ENCODE measurements at regions of chr5 and their contacts with region 1.

Region 1: GRCh38 chr5:115625579-115626444 is at the start of gene TMED7:
- DNase-seq: peak; percentile 100
- H3K4me3 Mint-ChIP-seq: no peak within 1 kb of the TSS
- H3K27ac Mint-ChIP-seq: peak within 1 kb of the TSS; percentile 92
- H3K4me1 Mint-ChIP-seq: peaks cover 23% of the 10 kb centered on the region
- H3K27me3 Mint-ChIP-seq: no peaks in the 10 kb centered on the region
- total RNA-seq, gene TMED7: 42.2 to 44.1 TPM

Region 2: GRCh38 chr5:115262321-115263077 is 363.3 kb before region 1 on chr5 and contains the start of gene PGGT1B:
- CTCF ChIA-PET with region 1: no interaction called
- POLR2A ChIA-PET with region 1: no interaction called
- intact Hi-C with region 1: loop called (anchors 1 kb)
- DNase-seq: peak; percentile 85
- H3K4me3 Mint-ChIP-seq: peak within 1 kb of the TSS; percentile 92
- H3K27ac Mint-ChIP-seq: peak within 1 kb of the TSS; percentile 80
- H3K4me1 Mint-ChIP-seq: peaks cover 47% of the 10 kb centered on the region
- H3K27me3 Mint-ChIP-seq: no peaks in the 10 kb centered on the region
- total RNA-seq, gene PGGT1B: 38.7 TPM

Region 3: GRCh38 chr5:115296124-115297022 is 329.4 kb before region 1 on chr5 and contains the start of gene CCDC112:
- CTCF ChIA-PET with region 1: no interaction called
- POLR2A ChIA-PET with region 1: interaction called, 6 read pairs
- intact Hi-C with region 1: loop called (anchors 2 kb)
- DNase-seq: peak; percentile 87
- H3K4me3 Mint-ChIP-seq: peak within 1 kb of the TSS; percentile 76
- H3K27ac Mint-ChIP-seq: no peak within 1 kb of the TSS
- H3K4me1 Mint-ChIP-seq: peaks cover 7% of the 10 kb centered on the region
- H3K27me3 Mint-ChIP-seq: peaks cover 8% of the 10 kb centered on the region
- total RNA-seq, gene CCDC112: 1.7 to 1.8 TPM

Region 4: GRCh38 chr5:115460472-115460871 is 165.3 kb before region 1 on chr5:
- CTCF ChIA-PET with region 1: no interaction called
- POLR2A ChIA-PET with region 1: no interaction called
- intact Hi-C with region 1: loop called (anchors 5 kb)
- DNase-seq: peak; percentile 25
- H3K4me3 Mint-ChIP-seq: no peak overlapping the region
- H3K27ac Mint-ChIP-seq: no peak overlapping the region
- H3K4me1 Mint-ChIP-seq: peaks cover 15% of the 10 kb centered on the region
- H3K27me3 Mint-ChIP-seq: peaks cover 17% of the 10 kb centered on the region

Region 5: DNA sequence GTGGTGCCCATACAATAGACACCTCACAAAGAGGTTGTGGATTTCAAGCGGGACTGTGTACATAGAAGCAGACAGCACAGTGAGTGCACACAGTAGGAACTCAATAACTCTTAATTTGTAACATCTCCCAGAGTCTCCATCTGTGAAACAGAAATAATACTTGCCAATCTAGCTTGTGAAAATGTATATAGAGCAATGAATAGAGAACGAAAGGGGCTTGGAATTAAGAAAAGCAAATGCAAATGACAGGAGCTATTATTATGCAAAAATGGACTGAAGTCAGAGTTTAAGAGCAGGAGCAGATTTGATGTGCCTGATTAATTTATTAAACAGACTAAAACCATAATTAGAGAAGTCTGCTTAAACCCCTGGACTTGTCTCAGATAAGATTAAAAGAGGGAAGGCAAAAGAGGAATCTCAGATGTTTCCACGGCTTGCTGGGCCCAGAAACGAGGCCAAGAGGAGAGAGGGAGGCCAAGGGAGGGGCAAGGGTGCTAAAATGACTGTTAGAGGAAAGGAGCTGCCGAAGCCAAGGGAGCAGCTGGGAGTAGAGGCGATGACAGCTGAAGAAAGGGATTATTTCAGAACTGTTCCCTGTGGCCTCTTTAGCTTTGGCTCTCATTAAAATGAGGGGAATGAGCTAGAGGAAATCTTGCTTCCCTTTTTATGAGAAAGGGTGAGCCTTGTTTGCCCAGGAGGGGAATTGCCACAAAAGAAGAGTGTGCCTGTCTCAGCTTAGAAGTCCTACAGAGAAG is 153.4 kb before region 1 on chr5:
- CTCF ChIA-PET with region 1: no interaction called
- POLR2A ChIA-PET with region 1: no interaction called
- intact Hi-C with region 1: no loop called
- DNase-seq: no peak
- H3K4me3 Mint-ChIP-seq: no peak overlapping the region
- H3K27ac Mint-ChIP-seq: no peak overlapping the region
- H3K4me1 Mint-ChIP-seq: no peaks in the 10 kb centered on the region
- H3K27me3 Mint-ChIP-seq: peaks cover 16% of the 10 kb centered on the region

Region 6: DNA sequence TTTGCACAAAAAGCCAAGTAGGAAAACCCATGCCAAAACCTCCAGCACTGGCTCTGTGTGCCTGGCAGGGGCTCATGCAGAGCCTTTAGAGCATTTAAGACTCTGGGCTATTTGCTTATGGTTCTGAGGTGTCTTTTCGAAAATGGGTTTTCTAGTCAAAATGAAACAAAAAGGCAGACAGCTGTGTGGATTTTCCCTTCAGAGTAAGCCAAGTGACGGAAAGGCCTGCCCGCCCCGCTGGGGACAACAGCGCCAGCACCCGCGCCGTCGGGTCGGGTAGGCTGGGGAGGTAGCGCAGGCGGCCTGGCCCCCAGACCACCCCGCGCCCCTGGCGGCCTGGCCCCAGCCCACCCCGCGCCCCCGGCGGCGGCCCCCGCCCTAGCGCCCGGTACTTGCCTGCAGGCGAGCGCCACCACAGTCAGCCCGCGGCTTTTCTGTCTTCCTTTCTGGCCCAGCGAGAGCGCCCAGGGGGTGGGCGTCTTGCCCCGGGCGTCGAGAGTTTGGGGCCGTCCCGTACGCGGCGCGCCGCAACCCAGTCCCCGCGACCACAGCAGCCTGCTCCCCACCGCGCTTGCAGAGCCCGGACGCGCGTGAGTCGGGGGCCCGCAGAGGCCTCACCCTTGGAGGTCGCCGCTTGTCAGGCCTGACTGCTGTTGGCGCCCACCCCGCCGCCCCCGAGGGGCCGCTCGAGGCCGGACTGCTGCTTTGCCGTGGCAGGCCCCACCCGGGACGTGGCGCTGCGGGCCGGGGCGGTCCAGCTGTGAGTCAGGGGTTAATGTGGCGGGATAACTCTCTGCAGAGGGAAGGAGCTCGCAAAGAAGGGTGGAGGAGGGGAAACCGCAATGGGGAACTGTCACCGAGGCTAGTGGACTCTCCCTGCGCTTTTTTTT is 23.9 kb before region 1 on chr5 and contains the start of gene TICAM2:
- CTCF ChIA-PET with region 1: interaction called, 3 read pairs
- POLR2A ChIA-PET with region 1: interaction called, 4 read pairs
- intact Hi-C with region 1: loop called (anchors 1 kb)
- DNase-seq: peak; percentile 76
- H3K4me3 Mint-ChIP-seq: peak within 1 kb of the TSS; percentile 53
- H3K27ac Mint-ChIP-seq: peak within 1 kb of the TSS; percentile 18
- H3K4me1 Mint-ChIP-seq: peaks cover 25% of the 10 kb centered on the region
- H3K27me3 Mint-ChIP-seq: no peaks in the 10 kb centered on the region
- total RNA-seq, gene TICAM2: 0.40 to 2.0 TPM